Gastrocnemius medialis (tissue), 4 donors: ENCODE measurements at regions of chr2 and their contacts with region 1.

Region 1: DNA sequence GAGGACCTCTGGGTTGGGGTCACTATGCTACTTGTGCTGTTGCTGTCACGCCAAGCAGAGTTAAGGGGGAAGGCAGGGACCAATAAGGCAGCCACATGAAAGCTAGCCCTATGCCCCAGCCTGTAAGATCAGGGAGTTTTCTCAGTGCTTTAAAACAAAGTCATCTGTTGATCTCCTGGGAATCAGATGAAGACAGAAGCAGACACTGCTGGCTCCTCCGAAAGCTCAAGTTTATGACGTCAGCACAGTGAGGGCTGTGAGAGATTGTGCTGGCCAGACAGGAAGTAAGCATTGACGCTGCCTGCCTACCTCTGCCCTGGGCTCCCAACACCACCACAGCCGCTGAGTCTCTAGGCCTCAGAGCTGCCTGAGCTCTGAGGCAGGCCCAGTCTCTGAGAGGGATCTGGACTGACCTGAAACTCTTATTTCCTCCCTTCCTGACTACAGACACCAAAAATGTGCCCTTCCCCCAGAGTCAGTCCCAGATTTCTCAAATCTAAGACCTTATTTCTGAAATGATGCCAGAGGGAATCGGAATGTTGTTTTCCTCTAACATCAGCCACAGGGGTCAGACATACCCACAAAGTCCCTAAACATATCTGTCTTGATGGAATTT is 118.1 kb upstream of the EPAS1 start:
- DNase-seq: peak; percentile 50 to 68
- ATAC-seq: peak; percentile 83 to 89
- H3K4me3 ChIP-seq: no peak overlapping the region
- H3K27ac ChIP-seq: peak overlapping the region; percentile 42 to 77 (median 57)
- H3K4me1 ChIP-seq: peaks cover 3 to 6% of the 10 kb centered on the region in 2 donors
- H3K27me3 ChIP-seq: no peaks in the 10 kb centered on the region
- CTCF ChIP-seq: no peak
- POLR2A ChIP-seq: no peak

Region 2: DNA sequence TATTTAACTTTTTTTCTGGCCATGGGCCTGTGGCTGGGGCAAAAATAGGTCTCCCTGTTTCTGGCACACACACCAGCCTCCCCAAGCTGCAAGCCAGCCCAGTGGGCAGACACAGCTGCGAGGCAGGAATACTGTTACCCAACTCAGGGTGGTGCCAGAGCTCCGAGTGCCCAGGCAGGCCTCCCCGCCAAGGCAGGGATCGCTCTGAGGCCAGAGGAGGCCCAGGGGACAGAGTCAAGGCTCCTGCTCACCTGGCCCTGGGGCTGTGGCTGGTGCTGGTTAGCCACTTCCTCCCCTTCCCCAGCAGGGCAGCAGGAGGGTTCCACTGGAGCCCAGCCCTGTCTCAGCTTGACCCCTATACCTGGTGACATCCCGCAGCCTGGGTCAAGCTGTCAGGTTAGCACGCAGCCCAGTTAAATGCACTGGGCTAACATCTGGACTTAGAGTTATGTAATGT is 51.0 kb after region 1 on chr2:
- in situ Hi-C with region 1: no loop called
- intact Hi-C with region 1: loop called (anchors 10 kb)
- DNase-seq: peak; percentile 16 to 53
- ATAC-seq: peak; percentile 74 to 87
- H3K4me3 ChIP-seq: no peak overlapping the region
- H3K27ac ChIP-seq: peak overlapping the region in 1 of 4 donors; percentile 27
- H3K4me1 ChIP-seq: peaks cover 9 to 14% of the 10 kb centered on the region in 2 donors
- H3K27me3 ChIP-seq: no peaks in the 10 kb centered on the region
- CTCF ChIP-seq: peak in 3 of 5 experiments; percentile 42 to 58 (median 52)
- POLR2A ChIP-seq: no peak